CD4-positive, alpha-beta memory T cell (primary cell): ENCODE measurements at regions of chr20 and their contacts with region 1.

Region 1: DNA sequence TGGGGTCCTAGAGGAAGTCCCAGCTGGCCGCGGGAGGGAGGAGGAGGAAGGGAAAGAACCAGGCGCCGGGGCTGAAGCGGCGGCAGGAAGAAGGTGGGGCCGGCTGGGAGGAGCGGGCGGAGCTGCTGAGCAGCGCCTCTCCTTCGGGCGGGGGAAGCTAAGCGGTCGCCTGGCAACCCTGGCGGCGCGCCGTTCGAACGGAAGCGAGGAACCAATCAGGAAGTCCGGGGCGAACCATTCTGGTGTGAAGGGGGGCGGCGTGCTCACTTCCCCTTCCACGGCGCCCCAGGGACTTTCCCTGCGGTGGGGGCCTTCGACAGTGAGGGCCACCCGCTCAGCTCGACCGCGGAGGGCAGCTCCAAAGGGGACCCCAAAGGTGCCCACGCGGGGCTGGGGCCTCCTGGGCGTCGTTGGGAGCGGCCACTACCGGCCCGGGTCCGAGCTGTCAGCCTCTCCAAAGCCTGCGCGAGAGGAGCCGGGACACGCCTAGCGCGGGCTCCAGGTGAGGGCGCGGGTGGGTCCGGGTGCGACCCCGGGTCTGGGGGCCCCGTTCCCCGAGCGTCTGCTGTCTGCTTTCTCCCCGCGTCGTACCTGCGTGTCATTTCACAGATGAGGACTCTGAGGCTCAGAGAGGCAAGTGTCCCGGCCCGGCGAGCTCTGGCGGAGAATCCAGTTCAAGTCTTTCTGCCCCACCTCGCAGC is at the start of gene FAM110A:
- DNase-seq: peak; percentile 95 to 97 (median 95)
- H3K4me3 ChIP-seq: peak within 1 kb of the TSS; percentile 81 to 83
- H3K4me3 Mint-ChIP-seq: peak within 1 kb of the TSS; percentile 85 to 96 (median 91)
- H3K27ac ChIP-seq: peak within 1 kb of the TSS; percentile 96
- H3K27ac Mint-ChIP-seq: peak within 1 kb of the TSS; percentile 82 to 96 (median 95)
- H3K4me1 ChIP-seq: peaks cover 39% of the 10 kb centered on the region
- H3K4me1 Mint-ChIP-seq: peaks cover 31 to 53% (median 38%) of the 10 kb centered on the region in 4 donors
- H3K27me3 ChIP-seq: no peaks in the 10 kb centered on the region
- H3K27me3 Mint-ChIP-seq: no peaks in the 10 kb centered on the region
- total RNA-seq, gene FAM110A: 19.8 to 21.7 TPM

Region 2: DNA sequence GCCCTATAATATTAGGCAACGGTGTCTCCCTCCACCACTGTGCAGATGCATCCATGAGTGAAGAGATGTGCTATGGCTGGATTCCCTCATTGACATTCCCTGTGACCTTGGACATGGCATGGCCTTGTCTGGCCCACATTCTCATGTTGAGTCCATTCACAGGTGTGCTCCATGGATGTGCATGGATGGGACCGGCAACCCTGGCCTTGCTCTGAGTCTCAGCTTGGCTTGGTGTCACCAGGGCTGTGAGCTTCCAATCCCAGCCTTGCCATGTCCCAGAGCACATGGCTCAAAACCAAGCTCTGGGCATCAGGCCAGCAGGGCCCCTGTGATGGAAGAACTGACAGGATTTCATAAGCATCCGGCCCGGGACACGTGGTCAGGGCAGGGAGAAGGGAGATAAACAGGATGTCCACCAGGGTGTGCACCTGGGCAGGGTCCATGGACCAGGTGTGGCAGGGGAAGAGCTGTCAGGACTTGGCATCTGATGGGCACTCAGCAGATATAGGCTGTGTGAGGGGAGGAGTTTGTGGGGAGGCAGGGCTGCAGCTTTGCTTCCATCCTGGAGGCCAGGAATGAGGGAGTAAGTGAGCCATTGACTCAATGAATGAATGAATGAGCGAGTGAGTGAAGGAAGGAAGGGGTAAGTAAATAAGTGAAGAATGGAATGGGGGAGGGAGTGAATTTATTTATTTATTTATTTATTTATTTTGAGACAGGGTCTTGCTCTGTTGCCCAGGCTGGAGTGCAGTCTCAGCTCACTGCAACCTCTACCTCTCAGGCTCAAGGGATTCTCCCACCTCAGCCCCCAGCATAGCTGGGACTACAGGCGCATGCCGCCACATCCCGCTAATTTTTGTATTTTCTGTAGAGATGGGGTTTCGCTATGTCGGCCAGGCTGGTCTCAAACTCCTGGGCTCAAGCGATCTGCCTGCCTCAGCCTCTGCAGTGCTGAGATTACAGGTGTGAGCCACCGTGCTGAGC is 471.0 kb before region 1 on chr20:
- CTCF ChIA-PET with region 1: no interaction called
- POLR2A ChIA-PET with region 1: no interaction called
- intact Hi-C with region 1: no loop called
- DNase-seq: peak in 1 of 5 donors; percentile 17
- H3K4me3 ChIP-seq: no peak overlapping the region
- H3K4me3 Mint-ChIP-seq: no peak overlapping the region
- H3K27ac ChIP-seq: no peak overlapping the region
- H3K27ac Mint-ChIP-seq: peak overlapping the region in 1 of 7 donors; percentile 51
- H3K4me1 ChIP-seq: peaks cover 19% of the 10 kb centered on the region
- H3K4me1 Mint-ChIP-seq: peaks cover 17 to 26% (median 22%) of the 10 kb centered on the region in 4 donors
- H3K27me3 ChIP-seq: no peaks in the 10 kb centered on the region
- H3K27me3 Mint-ChIP-seq: no peaks in the 10 kb centered on the region

Region 3: DNA sequence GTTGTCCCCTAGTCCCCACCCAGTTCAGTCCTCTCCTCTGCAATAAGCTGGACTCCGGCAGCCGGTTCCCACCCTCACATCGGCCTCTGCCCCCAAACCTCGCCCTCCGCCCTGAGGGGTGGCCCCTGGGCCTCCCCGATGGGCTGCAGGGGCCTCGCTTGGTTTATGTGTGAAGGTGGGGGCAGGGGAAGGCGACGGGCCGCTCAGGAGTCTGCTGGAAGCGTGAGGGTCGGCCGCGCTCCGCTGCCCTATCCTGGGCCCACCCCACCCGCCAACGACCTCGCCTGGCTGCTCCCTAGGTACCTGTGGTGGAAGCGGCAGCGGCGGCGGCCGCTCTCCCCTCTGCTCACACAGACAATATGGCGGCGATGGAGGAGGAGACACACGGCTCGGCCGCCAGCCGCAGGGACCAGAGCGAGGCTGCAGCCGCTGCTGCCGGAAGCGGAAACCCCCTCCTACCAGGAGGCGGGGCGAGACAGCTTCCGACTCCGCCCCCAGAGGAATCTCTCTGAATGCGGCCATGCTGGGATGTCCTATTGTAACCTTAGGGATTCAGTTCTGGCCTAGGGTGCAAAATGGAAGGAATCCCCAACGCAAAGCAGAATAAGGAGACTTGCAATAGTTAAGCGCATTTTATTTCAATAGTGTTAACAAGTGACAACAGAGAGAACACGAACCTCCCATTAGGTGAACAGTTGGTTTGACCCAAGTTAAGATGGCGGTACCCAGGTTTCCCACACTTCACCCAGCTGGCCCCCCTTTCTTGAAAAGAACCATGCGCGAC is 290.0 kb before region 1 on chr20 and contains the start of gene CSNK2A1:
- CTCF ChIA-PET with region 1: no interaction called
- POLR2A ChIA-PET with region 1: interaction called, 4 read pairs
- intact Hi-C with region 1: loop called (anchors 5 kb)
- DNase-seq: peak; percentile 94 to 99 (median 97)
- H3K4me3 ChIP-seq: peak within 1 kb of the TSS; percentile 45 to 93
- H3K4me3 Mint-ChIP-seq: peak within 1 kb of the TSS; percentile 85 to 100 (median 92)
- H3K27ac ChIP-seq: peak within 1 kb of the TSS; percentile 80
- H3K27ac Mint-ChIP-seq: peak within 1 kb of the TSS; percentile 98 to 100 (median 99)
- H3K4me1 ChIP-seq: peaks cover 50% of the 10 kb centered on the region
- H3K4me1 Mint-ChIP-seq: peaks cover 28 to 56% (median 43%) of the 10 kb centered on the region in 4 donors
- H3K27me3 ChIP-seq: no peaks in the 10 kb centered on the region
- H3K27me3 Mint-ChIP-seq: peaks cover 0 to 5% of the 10 kb centered on the region in 2 donors
- total RNA-seq, gene CSNK2A1: 81.6 to 87.8 TPM

Region 4: DNA sequence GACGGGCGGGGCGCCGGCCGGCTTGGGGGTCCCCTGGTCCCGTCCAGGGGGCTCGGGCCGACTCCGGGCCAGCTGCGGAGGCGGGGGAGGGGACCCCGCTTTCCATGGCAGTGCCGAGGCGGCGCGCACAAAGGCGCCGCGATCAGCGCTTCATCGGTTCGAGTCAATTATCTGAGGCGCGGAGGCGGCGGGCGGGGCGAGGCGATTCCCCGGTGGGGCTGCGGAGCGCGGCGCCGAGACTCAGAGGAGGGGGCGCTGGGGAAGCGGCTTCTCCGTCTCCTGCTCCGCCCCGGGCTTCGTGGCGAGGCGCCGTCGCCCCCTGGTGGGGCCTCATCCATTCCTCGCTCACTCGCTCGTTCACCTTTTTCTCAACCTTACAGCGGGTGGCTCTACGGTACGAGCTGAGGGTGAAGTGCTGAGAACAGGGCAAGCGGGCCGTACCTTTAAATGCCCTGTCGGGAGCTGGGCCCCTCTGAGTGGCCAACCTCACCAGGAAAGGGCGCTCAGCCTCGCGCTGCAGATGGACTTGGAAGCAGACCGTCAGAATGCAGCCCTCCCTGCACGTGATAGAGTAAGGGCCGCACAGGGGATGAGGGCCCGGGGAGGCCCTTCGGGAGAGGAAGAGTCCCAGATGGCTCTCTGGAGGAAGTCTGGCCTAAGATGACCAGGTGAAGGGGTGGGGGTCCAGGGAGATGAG is 105.2 kb before region 1 on chr20:
- CTCF ChIA-PET with region 1: no interaction called
- POLR2A ChIA-PET with region 1: no interaction called
- intact Hi-C with region 1: no loop called
- DNase-seq: peak in 4 of 5 donors; percentile 5 to 19 (median 12)
- H3K4me3 ChIP-seq: no peak overlapping the region
- H3K4me3 Mint-ChIP-seq: peak overlapping the region in 3 of 8 donors; percentile 36 to 62 (median 45)
- H3K27ac ChIP-seq: no peak overlapping the region
- H3K27ac Mint-ChIP-seq: no peak overlapping the region
- H3K4me1 ChIP-seq: peaks cover 4% of the 10 kb centered on the region
- H3K4me1 Mint-ChIP-seq: peaks cover 0 to 15% (median under 1%) of the 10 kb centered on the region in 4 donors
- H3K27me3 ChIP-seq: peaks cover 4% of the 10 kb centered on the region
- H3K27me3 Mint-ChIP-seq: peaks cover 39 to 55% of the 10 kb centered on the region in 2 donors

Region 5: DNA sequence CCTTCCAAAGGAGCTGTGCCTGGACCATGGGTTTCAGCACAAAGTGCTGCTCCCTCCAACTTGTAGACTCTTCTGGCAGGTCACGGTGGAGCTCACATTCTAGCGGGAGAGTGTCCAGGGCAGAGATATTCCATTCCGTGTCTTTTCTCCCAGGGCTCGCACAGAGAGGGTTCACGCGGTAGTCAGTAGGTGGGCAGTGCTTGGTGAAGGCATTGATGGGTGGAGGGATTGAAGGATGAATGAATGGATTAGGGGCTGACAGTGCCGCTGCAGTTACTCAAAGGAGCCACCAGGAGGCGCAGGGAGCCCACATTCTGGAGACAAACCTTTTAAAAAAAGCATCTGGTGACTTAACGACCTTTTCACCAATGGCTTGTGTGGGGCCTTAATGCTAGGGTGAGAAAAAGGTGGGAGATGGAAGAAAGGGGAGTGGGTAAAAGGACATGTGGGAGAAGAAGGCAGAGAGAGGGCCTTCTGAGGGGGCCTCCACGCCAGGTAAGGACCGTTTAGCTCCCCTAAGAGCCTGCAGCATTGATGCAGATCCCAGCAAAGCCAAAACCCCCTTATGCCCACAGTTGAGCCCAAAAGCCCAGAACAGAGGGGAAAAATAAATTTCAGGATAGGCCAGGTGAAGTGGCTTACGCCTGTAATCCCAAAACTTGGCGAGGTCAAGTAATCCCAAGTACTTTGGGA is 17.5 kb before region 1 on chr20:
- CTCF ChIA-PET with region 1: interaction called, 17 read pairs
- POLR2A ChIA-PET with region 1: no interaction called
- intact Hi-C with region 1: no loop called
- DNase-seq: peak; percentile 59 to 67 (median 64)
- H3K4me3 ChIP-seq: no peak overlapping the region
- H3K4me3 Mint-ChIP-seq: no peak overlapping the region
- H3K27ac ChIP-seq: no peak overlapping the region
- H3K27ac Mint-ChIP-seq: peak overlapping the region in 3 of 7 donors; percentile 65 to 86 (median 65)
- H3K4me1 ChIP-seq: no peaks in the 10 kb centered on the region
- H3K4me1 Mint-ChIP-seq: peaks cover 3 to 5% (median 4%) of the 10 kb centered on the region in 4 donors
- H3K27me3 ChIP-seq: no peaks in the 10 kb centered on the region
- H3K27me3 Mint-ChIP-seq: peaks cover 15 to 18% of the 10 kb centered on the region in 2 donors

Region 6: DNA sequence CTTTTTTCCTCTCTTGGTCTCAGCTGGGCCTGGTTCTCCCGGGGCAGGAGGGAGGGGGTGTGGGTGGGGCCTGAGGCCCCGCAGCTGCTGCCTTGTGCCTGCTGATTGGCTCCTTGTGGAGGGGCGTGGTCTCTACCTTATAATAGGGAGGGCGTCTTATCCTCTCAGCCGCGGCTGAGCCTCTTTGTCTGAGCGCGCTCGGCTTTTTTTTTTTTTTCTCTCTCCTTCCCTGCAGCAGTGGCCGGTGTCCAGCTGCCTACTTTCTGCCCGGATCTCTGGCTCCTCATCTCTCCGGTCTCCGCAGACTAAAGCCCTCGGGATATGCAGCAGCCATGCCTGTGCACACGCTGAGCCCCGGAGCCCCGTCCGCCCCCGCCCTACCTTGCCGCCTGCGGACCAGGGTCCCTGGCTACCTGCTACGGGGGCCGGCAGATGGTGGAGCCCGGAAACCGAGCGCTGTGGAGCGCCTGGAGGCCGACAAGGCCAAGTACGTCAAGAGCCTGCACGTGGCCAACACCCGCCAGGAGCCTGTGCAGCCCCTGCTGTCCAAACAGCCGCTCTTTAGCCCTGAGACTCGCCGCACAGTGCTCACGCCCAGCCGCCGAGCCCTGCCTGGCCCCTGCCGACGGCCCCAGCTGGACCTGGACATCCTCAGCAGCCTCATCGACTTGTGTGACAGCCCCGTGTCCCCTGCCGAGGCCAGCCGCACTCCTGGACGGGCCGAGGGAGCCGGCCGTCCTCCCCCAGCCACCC is 11.0 kb after region 1 on chr20:
- CTCF ChIA-PET with region 1: interaction called, 20 read pairs
- POLR2A ChIA-PET with region 1: interaction called, 130 read pairs
- intact Hi-C with region 1: loop called (anchors 1 kb)
- DNase-seq: peak; percentile 81 to 96 (median 86)
- H3K4me3 ChIP-seq: peak overlapping the region; percentile 67 to 74
- H3K4me3 Mint-ChIP-seq: peak overlapping the region; percentile 87 to 93 (median 90)
- H3K27ac ChIP-seq: peak overlapping the region; percentile 70
- H3K27ac Mint-ChIP-seq: peak overlapping the region; percentile 70 to 89 (median 83)
- H3K4me1 ChIP-seq: peaks cover 68% of the 10 kb centered on the region
- H3K4me1 Mint-ChIP-seq: peaks cover 27 to 62% (median 45%) of the 10 kb centered on the region in 4 donors
- H3K27me3 ChIP-seq: no peaks in the 10 kb centered on the region
- H3K27me3 Mint-ChIP-seq: no peaks in the 10 kb centered on the region

Region 7: DNA sequence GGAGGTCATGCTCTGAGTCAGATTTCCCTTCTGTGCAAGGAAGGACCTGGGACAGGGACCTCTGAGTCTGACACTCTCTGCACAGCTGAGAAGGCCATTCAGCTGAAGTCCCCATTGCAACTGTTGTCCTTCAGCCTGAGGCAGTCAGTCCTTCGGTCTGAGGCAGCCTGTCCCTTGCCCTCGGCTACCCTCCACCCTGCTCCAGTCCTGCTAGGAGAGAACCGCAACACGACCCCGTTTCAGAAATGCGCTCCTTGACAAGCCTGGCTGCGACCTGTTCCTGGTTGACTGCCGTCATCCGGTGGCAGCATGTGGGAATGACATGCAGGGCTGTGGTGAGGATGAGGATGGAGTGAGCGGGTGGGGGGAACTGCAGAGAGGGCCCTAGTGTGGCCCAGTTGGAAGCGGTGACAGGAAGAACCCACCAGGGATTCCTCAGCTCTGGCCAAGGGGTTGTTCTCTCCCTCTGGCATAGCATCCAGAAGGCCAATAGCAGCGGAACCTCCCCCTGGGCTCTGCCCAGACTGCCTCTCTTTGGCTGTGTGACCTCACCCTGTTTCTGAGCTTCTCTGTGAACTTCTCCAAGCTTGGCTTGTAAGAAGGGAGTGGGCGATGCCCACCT is 122.8 kb after region 1 on chr20:
- CTCF ChIA-PET with region 1: interaction called, 15 read pairs
- POLR2A ChIA-PET with region 1: no interaction called
- intact Hi-C with region 1: no loop called
- DNase-seq: peak; percentile 62 to 74 (median 64)
- H3K4me3 ChIP-seq: no peak overlapping the region
- H3K4me3 Mint-ChIP-seq: no peak overlapping the region
- H3K27ac ChIP-seq: no peak overlapping the region
- H3K27ac Mint-ChIP-seq: no peak overlapping the region
- H3K4me1 ChIP-seq: no peaks in the 10 kb centered on the region
- H3K4me1 Mint-ChIP-seq: peaks cover 0 to 3% (median 1%) of the 10 kb centered on the region in 4 donors
- H3K27me3 ChIP-seq: peaks cover 3% of the 10 kb centered on the region
- H3K27me3 Mint-ChIP-seq: peaks cover 18 to 39% of the 10 kb centered on the region in 2 donors

Region 8: DNA sequence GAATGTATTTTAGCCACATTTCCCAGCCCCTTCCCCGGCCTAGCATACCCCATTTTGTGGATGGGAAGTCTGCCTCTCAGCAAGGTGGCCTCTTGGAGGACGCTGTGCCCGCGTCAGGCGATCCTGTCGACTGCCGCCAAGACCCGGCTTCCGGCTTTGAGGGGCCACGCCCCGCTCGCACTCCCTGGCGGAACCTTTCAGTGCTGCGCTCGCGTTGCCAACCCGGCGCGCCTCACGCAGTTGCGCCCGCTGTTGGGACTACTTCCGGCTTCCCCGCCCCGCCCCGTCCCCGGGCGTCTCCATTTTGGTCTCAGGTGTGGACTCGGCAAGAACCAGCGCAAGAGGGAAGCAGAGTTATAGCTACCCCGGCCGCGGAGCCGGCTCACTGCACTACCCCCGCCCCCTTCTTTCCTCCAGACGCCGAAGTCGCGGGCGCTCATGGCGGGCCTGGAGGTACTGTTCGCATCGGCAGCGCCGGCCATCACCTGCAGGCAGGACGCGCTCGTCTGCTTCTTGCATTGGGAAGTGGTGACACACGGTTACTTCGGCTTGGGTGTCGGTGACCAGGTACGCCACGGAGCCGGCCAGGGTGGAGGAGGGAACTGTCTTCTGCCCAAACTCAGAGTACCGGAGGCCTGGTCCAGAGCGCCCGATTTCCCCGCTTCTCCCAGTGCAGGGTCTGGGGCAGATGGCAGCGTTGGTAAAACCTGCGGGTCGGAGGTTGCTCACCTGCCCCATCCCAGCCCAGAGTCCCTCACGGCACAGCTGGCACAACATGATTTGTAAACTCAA is 284.9 kb after region 1 on chr20 and contains the start of gene PSMF1:
- CTCF ChIA-PET with region 1: no interaction called
- POLR2A ChIA-PET with region 1: no interaction called
- intact Hi-C with region 1: loop called (anchors 1 kb)
- DNase-seq: peak; percentile 95 to 98 (median 96)
- H3K4me3 ChIP-seq: peak within 1 kb of the TSS; percentile 85 to 99
- H3K4me3 Mint-ChIP-seq: peak within 1 kb of the TSS; percentile 91 to 97 (median 95)
- H3K27ac ChIP-seq: peak within 1 kb of the TSS; percentile 78
- H3K27ac Mint-ChIP-seq: peak within 1 kb of the TSS; percentile 91 to 97 (median 95)
- H3K4me1 ChIP-seq: peaks cover 52% of the 10 kb centered on the region
- H3K4me1 Mint-ChIP-seq: peaks cover 47 to 70% (median 58%) of the 10 kb centered on the region in 4 donors
- H3K27me3 ChIP-seq: no peaks in the 10 kb centered on the region
- H3K27me3 Mint-ChIP-seq: no peaks in the 10 kb centered on the region
- total RNA-seq, gene PSMF1: 118 to 123 TPM